ENCODE measurements at regions of chr17 and their contacts with region 1.

Region 1: GRCh38 chr17:45277216-45277849 is 15.4 kb upstream of the SPATA32 start:
- DNase-seq: peak; percentile 95
- ATAC-seq: peak; percentile 95
- H3K4me3 Mint-ChIP-seq: no peak overlapping the region
- H3K27ac Mint-ChIP-seq: peak overlapping the region; percentile 39
- H3K4me1 Mint-ChIP-seq: peaks cover 14% of the 10 kb centered on the region
- H3K27me3 Mint-ChIP-seq: no peaks in the 10 kb centered on the region

Region 2: GRCh38 chr17:45218895-45219661 is 58.3 kb before region 1 on chr17:
- CTCF ChIA-PET with region 1: interaction called, 54 read pairs
- POLR2A ChIA-PET with region 1: interaction called, 7 read pairs
- intact Hi-C with region 1: no loop called
- DNase-seq: peak; percentile 92
- ATAC-seq: no peak
- H3K4me3 Mint-ChIP-seq: peak overlapping the region; percentile 78
- H3K27ac Mint-ChIP-seq: peak overlapping the region; percentile 79
- H3K4me1 Mint-ChIP-seq: peaks cover 33% of the 10 kb centered on the region
- H3K27me3 Mint-ChIP-seq: no peaks in the 10 kb centered on the region

Region 3: GRCh38 chr17:45256114-45256966 is 21.0 kb before region 1 on chr17:
- CTCF ChIA-PET with region 1: interaction called, 21 read pairs
- POLR2A ChIA-PET with region 1: no interaction called
- intact Hi-C with region 1: no loop called
- DNase-seq: no peak
- ATAC-seq: peak; percentile 56
- H3K4me3 Mint-ChIP-seq: no peak overlapping the region
- H3K27ac Mint-ChIP-seq: peak overlapping the region; percentile 43
- H3K4me1 Mint-ChIP-seq: peaks cover 57% of the 10 kb centered on the region
- H3K27me3 Mint-ChIP-seq: no peaks in the 10 kb centered on the region

Region 4: DNA sequence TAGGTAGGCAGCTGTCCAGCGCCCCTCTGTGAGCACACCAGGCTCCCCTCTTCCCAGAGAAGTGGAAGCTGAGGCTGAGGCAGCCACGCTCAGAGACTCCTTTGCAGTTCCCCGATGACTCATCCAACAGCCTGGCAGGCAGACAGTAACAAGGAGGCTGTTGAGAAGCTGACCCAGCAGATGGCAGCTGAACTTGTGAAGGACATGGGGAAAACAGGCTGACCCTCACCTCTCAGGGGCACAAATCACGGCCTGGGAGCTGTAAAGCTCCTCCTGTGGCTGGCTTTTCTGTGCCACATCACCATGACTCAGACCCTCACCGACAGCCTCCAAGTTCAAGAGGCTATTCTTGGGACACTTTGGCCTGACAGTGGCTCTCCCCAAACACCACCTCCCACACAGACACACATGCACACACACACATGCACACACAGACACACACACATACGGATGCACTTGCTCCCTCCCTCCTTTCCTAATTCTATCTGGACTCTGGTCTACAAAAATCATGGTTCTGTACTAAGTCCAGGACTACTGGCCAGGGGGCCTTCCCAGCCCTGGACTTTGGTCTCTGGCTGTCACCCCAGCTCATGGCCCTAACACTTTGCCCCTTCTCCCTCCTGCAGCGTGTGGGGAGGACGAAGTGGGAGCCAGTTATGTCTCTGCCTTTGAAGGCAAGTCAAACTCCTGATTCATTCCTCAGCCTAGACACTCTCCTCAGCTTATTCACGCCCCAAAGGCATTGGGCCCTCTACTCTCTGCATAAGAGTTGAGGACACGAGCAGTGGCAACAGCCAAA is 16.3 kb after region 1 on chr17:
- CTCF ChIA-PET with region 1: interaction called, 27 read pairs
- POLR2A ChIA-PET with region 1: interaction called, 7 read pairs
- intact Hi-C with region 1: no loop called
- DNase-seq: peak; percentile 60
- ATAC-seq: peak; percentile 75
- H3K4me3 Mint-ChIP-seq: no peak overlapping the region
- H3K27ac Mint-ChIP-seq: peak overlapping the region; percentile 71
- H3K4me1 Mint-ChIP-seq: peaks cover 61% of the 10 kb centered on the region
- H3K27me3 Mint-ChIP-seq: no peaks in the 10 kb centered on the region

Region 5: DNA sequence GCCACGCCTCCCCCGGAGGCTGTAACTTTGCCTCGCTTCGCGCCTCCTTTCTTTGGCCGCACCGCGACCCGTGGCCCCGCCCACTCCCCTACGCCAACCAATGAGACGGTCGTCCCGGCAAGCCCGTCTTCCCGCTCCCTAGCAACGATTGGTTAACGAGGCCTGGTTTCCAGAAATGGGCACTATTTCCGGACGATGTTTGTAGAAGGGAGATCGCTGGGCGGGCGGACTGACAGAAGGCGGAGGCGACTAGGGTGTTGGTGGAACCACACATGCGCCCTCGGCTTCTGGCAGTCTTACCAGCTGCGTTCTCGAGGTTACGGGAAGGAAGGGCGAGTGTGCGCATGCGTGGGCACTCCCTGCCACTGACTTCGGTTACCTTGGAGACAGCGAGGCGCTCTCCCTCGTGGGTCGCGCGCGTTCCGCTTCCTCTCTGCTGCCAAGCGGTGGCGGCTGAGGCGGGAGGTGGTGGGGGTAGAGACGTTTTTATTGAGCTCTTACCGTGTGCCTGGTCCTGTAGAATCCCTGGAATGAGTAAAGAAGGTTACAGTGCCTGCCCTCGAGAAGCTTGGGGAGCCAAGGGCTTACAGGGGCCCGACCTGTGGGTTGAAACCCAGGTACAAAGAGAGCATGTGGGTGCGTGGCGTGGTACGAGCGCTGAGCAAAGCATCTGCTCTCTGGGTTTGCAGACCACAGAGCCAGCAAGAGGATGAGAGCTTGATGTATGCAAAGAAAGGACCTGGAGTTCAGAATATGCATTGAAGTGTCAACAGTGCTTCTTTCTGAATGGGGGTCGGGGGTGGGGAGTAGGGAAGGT is 40.0 kb after region 1 on chr17:
- CTCF ChIA-PET with region 1: interaction called, 29 read pairs
- POLR2A ChIA-PET with region 1: interaction called, 7 read pairs
- intact Hi-C with region 1: loop called (anchors 2 kb)
- DNase-seq: peak; percentile 100
- ATAC-seq: peak; percentile 81
- H3K4me3 Mint-ChIP-seq: peak overlapping the region; percentile 91
- H3K27ac Mint-ChIP-seq: peak overlapping the region; percentile 89
- H3K4me1 Mint-ChIP-seq: peaks cover 65% of the 10 kb centered on the region
- H3K27me3 Mint-ChIP-seq: no peaks in the 10 kb centered on the region

Region 6: GRCh38 chr17:45371414-45372327 is 94.3 kb after region 1 on chr17:
- CTCF ChIA-PET with region 1: interaction called, 28 read pairs
- POLR2A ChIA-PET with region 1: no interaction called
- intact Hi-C with region 1: no loop called
- DNase-seq: peak; percentile 75
- ATAC-seq: peak; percentile 89
- H3K4me3 Mint-ChIP-seq: peak overlapping the region; percentile 55
- H3K27ac Mint-ChIP-seq: peak overlapping the region; percentile 51
- H3K4me1 Mint-ChIP-seq: peaks cover 17% of the 10 kb centered on the region
- H3K27me3 Mint-ChIP-seq: peaks cover 12% of the 10 kb centered on the region

Region 7: GRCh38 chr17:45398800-45399199 is 121.5 kb after region 1 on chr17:
- CTCF ChIA-PET with region 1: interaction called, 167 read pairs
- POLR2A ChIA-PET with region 1: no interaction called
- intact Hi-C with region 1: no loop called
- DNase-seq: no peak
- ATAC-seq: no peak
- H3K4me3 Mint-ChIP-seq: no peak overlapping the region
- H3K27ac Mint-ChIP-seq: no peak overlapping the region
- H3K4me1 Mint-ChIP-seq: no peaks in the 10 kb centered on the region
- H3K27me3 Mint-ChIP-seq: no peaks in the 10 kb centered on the region

Measured in activated CD4-positive, alpha-beta T cell treated with anti-CD3 and anti-CD28 coated beads for 36 hours (primary cell).